ENCODE measurements at regions of chr14 and their contacts with region 1.

Region 1: GRCh38 chr14:94485944-94486841 is 10.2 kb upstream of the SERPINA9 start:
- DNase-seq: peak; percentile 54 to 75
- H3K4me3 ChIP-seq: peak overlapping the region; percentile 24; the same call in 1 of the 2 replicates
- H3K4me3 Mint-ChIP-seq: no peak overlapping the region
- H3K27ac Mint-ChIP-seq: no peak overlapping the region
- H3K4me1 ChIP-seq: no peaks in the 10 kb centered on the region
- H3K4me1 Mint-ChIP-seq: no peaks in the 10 kb centered on the region
- H3K27me3 ChIP-seq: no peaks in the 10 kb centered on the region
- H3K27me3 Mint-ChIP-seq: peaks cover 4% of the 10 kb centered on the region
- CTCF ChIP-seq: peak; percentile 95 to 98

Region 2: DNA sequence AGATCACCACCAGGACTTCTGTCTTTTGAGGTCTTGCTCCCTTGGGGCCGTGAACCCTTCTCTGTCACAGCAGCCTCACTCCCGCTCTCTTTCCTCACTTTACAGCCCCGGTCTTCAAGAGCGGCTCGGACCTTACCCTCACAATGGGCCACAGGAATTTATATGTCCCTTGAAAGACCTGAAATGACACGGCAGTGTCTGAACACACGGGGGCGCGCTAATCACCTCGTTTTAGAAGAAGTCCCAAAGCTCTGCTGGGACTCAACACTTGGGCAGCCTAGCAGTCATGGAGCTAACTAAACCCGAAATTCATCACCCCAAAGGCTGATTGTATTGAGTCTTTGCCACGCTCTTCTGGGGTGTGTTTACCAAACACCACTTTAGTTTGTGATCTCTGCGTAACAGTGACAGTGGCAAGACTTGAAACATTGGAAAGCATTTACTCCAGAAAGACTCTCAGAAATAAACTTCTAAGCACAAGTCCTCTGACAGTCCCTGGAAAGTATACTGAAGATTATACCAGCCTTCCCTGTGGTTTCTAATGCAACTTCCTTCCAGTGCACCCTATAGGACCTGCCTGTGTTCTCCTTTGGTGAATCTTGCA is 62.6 kb before region 1 on chr14:
- CTCF ChIA-PET with region 1: interaction called, 26 read pairs
- POLR2A ChIA-PET with region 1: no interaction called
- intact Hi-C with region 1: loop called (anchors 1 kb)
- DNase-seq: peak; percentile 80 to 86
- H3K4me3 ChIP-seq: no peak overlapping the region
- H3K4me3 Mint-ChIP-seq: peak overlapping the region; percentile 13
- H3K27ac Mint-ChIP-seq: no peak overlapping the region
- H3K4me1 ChIP-seq: no peaks in the 10 kb centered on the region
- H3K4me1 Mint-ChIP-seq: peaks cover 7% of the 10 kb centered on the region
- H3K27me3 ChIP-seq: no peaks in the 10 kb centered on the region
- H3K27me3 Mint-ChIP-seq: no peaks in the 10 kb centered on the region
- CTCF ChIP-seq: peak; percentile 65 to 79

Region 3: GRCh38 chr14:94428610-94429009 is 57.6 kb before region 1 on chr14:
- CTCF ChIA-PET with region 1: interaction called, 98 read pairs
- POLR2A ChIA-PET with region 1: interaction called, 5 read pairs
- intact Hi-C with region 1: loop called (anchors 1 kb)
- DNase-seq: no peak
- H3K4me3 ChIP-seq: no peak overlapping the region
- H3K4me3 Mint-ChIP-seq: no peak overlapping the region
- H3K27ac Mint-ChIP-seq: no peak overlapping the region
- H3K4me1 ChIP-seq: no peaks in the 10 kb centered on the region
- H3K4me1 Mint-ChIP-seq: peaks cover under 1% of the 10 kb centered on the region
- H3K27me3 ChIP-seq: no peaks in the 10 kb centered on the region
- H3K27me3 Mint-ChIP-seq: no peaks in the 10 kb centered on the region
- CTCF ChIP-seq: no peak

Region 4: DNA sequence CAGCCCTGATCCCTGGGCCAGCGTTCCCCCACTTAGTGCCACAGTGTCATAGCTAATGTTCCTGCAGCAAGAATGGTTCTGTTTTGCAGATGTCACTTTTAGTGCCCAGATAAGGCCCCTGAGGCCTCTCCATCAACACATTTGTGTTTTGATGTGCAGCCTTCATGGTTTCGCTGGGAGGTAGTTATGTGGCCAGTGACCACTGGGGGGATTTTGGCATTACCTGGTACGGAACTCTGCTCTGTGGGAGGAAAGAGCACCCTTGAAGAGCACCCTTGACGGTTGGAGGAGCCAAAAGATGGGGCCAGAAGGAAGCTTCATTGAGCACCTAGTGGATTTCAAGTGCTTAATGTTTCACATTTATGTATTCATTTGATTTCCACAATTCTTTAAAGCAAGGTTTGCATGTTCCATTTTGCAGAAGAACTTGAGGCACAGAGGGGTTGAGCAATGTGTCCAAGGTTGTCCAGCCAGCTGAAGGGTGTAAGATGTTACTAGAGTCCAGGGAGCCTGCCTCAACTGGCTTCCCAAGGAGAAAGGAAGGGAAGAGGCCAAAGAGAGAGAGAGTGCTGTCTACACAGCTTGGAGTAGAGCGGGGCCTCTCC is 46.6 kb before region 1 on chr14:
- CTCF ChIA-PET with region 1: no interaction called
- POLR2A ChIA-PET with region 1: no interaction called
- intact Hi-C with region 1: loop called (anchors 1 kb)
- DNase-seq: no peak
- H3K4me3 ChIP-seq: no peak overlapping the region
- H3K4me3 Mint-ChIP-seq: no peak overlapping the region
- H3K27ac Mint-ChIP-seq: no peak overlapping the region
- H3K4me1 ChIP-seq: no peaks in the 10 kb centered on the region
- H3K4me1 Mint-ChIP-seq: no peaks in the 10 kb centered on the region
- H3K27me3 ChIP-seq: no peaks in the 10 kb centered on the region
- H3K27me3 Mint-ChIP-seq: peaks cover 3% of the 10 kb centered on the region
- CTCF ChIP-seq: no peak

Measured in Caco-2 (cell line).